ENCODE measurements at regions of chr11 and their contacts with region 1.

Region 1: DNA sequence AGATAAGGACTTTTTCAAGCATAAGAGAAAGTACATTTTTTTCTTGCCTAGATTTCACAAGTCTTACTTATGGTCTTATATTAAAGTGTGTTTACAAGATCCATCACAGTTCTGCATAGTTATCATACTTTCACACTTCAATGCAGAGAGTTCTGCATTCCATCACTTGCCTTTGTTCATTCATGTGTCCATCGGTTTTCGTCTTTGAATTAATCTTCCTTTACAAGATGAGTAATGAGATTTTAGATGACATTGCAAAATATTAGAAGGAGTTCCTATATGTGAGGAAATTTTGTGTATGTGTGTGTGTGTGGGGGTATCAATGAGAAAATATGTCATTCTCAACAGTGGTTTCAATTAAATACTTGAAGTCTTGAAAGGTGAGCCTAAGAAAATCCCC is 98.1 kb upstream of the GUCY1A2 start:
- DNase-seq: no peak
- H3K4me3 ChIP-seq: no peak overlapping the region
- H3K27ac ChIP-seq: no peak overlapping the region
- H3K4me1 ChIP-seq: no peaks in the 10 kb centered on the region
- H3K27me3 ChIP-seq: no peaks in the 10 kb centered on the region
- CTCF ChIP-seq: no peak
- EP300 ChIP-seq: no peak
- POLR2A ChIP-seq: no peak

Region 2: DNA sequence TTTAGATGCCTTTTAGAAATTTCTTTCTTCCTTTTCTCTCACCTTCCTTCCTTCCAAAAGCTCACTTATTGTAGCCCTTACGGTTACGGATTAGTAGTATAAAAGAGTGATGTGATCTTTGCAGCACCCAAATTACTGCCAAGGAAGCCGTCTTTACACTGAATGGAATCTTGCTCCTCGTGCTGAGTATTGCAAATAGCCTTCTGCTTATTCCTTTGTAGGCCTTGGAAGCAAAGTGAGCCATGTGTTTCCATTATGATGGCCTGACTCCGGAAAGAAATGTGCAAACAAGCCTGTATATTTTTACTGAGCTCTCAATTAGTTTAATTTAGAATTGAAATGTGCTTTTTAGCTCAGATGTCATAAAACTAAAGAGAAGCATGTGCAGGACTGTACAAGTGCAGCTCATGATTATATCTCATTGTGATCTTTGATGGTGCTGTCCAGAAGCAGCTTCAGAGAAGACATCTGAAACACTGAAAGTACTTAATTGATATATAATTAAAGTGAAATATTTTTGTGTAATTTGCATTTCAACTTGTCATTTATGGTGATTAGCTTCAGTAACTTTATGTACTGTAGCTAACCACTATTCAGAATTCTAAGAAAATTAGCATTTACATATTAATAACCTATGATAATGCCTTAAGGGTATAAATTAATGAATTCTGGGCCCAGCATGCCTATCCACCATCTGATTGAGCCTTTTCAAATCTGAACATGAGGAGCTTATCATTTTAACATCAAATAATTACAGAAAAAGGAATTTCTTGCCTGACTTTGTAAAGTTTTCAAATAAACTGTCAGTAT is 1377.2 kb before region 1 on chr11:
- intact Hi-C with region 1: loop called in 1 of 4 experiments (anchors 5 kb)
- DNase-seq: no peak
- H3K4me3 ChIP-seq: no peak overlapping the region
- H3K27ac ChIP-seq: no peak overlapping the region
- H3K4me1 ChIP-seq: no peaks in the 10 kb centered on the region
- H3K27me3 ChIP-seq: peaks cover 2% of the 10 kb centered on the region
- CTCF ChIP-seq: no peak
- EP300 ChIP-seq: no peak
- POLR2A ChIP-seq: no peak